SK-N-SH (cell line): ENCODE measurements at regions of chr10 and their contacts with region 1.

Region 1: GRCh38 chr10:43348511-43349312 is 22.7 kb upstream of the FXYD4 start:
- DNase-seq: peak; percentile 95
- H3K4me3 ChIP-seq: no peak overlapping the region; a peak in 1 of 4 replicates
- H3K27ac ChIP-seq: no peak overlapping the region
- H3K4me1 ChIP-seq: peaks cover 0 to 17% of the 10 kb centered on the region in 2 experiments; a peak in 2 of 4 replicates
- H3K27me3 ChIP-seq: no peaks in the 10 kb centered on the region
- CTCF ChIP-seq: peak; percentile 90
- EP300 ChIP-seq: no peak
- RAD21 ChIP-seq: peak; percentile 93

Region 2: GRCh38 chr10:43338113-43338512 is 10.6 kb before region 1 on chr10:
- CTCF ChIA-PET with region 1: interaction called, 13 read pairs
- POLR2A ChIA-PET with region 1: no interaction called
- DNase-seq: peak; percentile 19
- H3K4me3 ChIP-seq: no peak overlapping the region
- H3K27ac ChIP-seq: no peak overlapping the region
- H3K4me1 ChIP-seq: no peaks in the 10 kb centered on the region
- H3K27me3 ChIP-seq: no peaks in the 10 kb centered on the region
- CTCF ChIP-seq: no peak
- EP300 ChIP-seq: no peak
- RAD21 ChIP-seq: no peak